Lower leg skin (tissue), 4 donors: ENCODE measurements at regions of chr6 and their contacts with region 1.

Region 1: DNA sequence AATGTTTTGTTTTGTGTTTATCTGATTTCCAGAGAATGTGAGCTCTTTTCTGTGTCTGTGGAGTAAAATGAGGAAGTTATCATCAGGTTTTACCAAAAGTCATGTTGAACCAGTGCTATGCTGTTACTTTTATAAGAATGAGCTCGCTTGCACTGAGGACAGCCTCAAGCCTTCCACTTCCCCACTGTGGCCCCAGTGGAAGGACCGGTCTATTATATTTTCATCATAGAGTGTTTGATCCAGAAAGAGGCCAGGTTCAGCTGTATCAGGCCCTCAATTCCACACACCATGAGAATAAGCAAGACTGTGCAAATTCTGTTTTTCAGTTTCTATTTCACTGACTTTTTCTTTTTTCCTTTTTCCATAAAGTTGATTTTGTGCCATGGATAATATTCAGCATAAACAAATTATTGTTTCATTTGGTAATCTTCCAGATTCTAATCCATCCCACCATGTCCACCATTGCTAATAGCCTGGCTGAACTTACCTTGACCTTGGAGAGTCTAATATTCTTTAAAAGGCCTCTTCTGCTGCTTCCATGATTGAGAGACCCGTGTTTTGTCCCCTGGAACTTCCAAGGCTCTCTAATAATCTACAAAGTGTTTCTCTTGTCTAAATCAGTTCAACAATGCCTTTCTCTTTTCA is 286.2 kb downstream of the THBS2 start:
- DNase-seq: no peak
- H3K4me3 ChIP-seq: no peak overlapping the region
- CTCF ChIP-seq: no peak
- POLR2A ChIP-seq: no peak

Region 2: DNA sequence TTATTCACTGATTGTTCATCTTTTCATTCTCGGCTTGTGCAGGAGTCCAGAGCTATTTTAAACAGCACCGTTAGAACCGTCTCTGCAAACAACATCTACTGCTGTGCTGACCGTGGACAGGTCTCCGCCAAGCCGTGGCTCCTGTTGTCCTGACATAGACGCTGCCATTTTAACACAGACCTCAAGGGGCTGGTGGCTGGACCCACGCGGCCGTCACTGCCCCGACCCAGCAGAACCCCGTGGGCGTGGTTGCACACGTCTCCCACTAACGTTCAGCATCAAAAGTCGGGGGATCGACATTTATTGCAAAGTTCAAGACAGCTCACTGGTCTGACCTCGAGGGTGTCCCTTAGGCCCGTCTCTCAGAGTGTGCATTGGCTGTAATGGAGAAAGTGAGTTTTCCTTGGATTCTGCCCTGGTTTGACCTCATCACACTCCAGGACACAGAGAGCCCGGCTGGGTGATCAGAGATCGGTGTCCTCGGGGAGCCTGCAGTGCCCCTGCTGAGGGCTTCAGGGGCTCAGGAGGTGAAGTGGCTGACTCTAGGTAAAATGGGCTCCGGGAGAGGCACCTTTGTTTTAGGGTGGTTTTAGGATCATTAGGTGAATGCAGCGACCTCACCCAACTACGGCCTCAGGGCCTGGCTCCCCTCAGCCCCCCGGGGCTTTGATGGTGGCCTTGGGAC is 77.0 kb before region 1 on chr6:
- intact Hi-C with region 1: no loop called
- DNase-seq: no peak
- H3K4me3 ChIP-seq: no peak overlapping the region
- CTCF ChIP-seq: no peak
- POLR2A ChIP-seq: no peak

Region 3: DNA sequence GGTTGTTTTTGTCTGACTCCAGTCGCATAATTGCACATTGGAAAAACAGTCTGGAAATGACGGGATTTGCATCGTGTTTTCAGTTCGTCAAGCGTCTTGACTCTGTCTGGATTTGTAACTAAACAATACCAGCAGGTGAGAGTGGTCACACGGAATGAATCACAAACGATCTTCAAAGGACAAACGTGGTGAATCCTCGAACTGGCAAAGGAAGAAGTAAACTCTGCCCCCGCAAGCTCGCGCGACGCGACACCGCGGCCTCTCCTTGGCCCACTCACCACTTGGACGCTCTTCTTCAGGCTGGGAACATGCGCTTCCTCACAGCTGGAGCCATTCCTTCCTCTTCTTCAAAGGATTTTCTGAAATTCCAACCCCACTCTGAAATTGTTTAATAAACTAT is 66.3 kb before region 1 on chr6:
- intact Hi-C with region 1: loop called (anchors 2 kb)
- DNase-seq: peak in 1 of 2 donors; percentile 72
- H3K4me3 ChIP-seq: no peak overlapping the region
- CTCF ChIP-seq: no peak
- POLR2A ChIP-seq: no peak